Heart right ventricle (tissue), 16 donors: ENCODE measurements at regions of chr2 and their contacts with region 1.

Region 1: DNA sequence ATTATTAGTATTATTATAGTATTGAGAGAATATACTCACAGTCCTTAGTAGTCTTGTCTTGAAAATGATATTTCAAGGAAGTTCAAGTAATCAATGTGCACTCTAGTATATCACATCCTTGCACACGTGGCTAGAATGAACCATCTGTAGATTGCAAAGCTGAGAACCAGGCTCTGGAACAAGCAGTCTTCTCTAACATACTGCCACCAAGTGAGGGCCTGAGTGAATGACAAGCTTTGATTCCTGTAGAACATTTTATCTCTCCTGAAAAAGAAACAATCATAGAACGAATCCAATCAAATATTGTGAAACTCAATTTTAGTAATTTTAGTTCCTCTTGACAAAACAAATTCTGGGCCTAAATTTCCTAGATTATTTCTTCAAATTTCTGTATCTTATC is 55.3 kb upstream of the SULT1C3 start:
- DNase-seq: no peak
- ATAC-seq: no peak
- H3K4me3 ChIP-seq: no peak overlapping the region
- H3K27ac ChIP-seq: no peak overlapping the region
- H3K4me1 ChIP-seq: no peaks in the 10 kb centered on the region
- H3K27me3 ChIP-seq: no peaks in the 10 kb centered on the region
- CTCF ChIP-seq: peak in 7 of 9 donors; percentile 12 to 41 (median 31)

Region 2: DNA sequence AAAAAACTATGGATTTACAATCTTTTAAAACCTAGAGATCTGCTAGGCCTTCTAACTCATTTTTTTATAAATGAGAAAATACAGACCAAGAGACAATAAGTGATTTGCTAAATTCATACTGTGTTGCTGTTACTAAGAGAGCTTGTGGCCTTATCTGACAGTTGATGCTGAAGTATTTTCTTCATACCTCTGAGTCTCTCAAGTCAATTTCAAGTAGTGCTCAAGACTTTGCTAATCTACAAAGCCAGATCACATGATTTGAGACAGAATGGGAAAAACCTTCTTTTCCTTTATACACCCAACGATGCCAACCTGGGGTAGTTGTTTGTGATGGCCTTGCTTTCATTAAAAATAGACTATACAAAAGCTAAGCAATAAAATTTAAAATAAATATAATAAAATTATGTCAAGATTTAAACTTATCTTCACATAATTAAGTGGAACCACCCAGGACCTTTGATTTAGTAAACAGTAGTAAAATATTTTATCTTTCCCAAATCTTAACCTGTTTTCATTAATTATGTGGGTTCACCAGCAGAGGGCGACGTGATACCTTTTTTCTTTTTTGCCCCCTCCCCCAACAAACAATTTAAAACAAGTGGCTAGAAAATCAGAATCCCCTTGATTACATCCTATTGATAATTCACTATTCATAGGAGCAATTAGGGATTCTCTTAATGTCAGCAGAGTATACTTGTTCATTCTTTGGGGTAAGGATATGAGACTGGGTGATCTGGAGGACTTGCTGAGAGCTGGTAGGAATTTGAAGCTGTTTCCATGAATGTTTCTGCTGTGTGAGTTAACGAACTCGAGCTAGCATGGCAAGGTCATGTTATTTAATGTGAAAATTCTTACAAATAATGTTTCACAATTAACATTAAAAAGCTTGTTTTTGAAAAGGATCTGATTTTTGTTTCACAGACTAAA is 247.7 kb before region 1 on chr2:
- intact Hi-C with region 1: loop called in 1 of 10 experiments (anchors 10 kb)
- DNase-seq: no peak
- ATAC-seq: no peak
- H3K4me3 ChIP-seq: no peak overlapping the region
- H3K27ac ChIP-seq: no peak overlapping the region
- H3K4me1 ChIP-seq: no peaks in the 10 kb centered on the region
- H3K27me3 ChIP-seq: peaks cover 0 to 13% (median 0%) of the 10 kb centered on the region in 7 donors
- CTCF ChIP-seq: peak; percentile 24 to 56 (median 45)

Region 3: GRCh38 chr2:108034849-108035248 is 149.6 kb before region 1 on chr2:
- intact Hi-C with region 1: loop called in 1 of 10 experiments (anchors 2 kb)
- DNase-seq: no peak
- ATAC-seq: no peak
- H3K4me3 ChIP-seq: no peak overlapping the region
- H3K27ac ChIP-seq: no peak overlapping the region
- H3K4me1 ChIP-seq: no peaks in the 10 kb centered on the region
- H3K27me3 ChIP-seq: no peaks in the 10 kb centered on the region
- CTCF ChIP-seq: no peak